ENCODE measurements at regions of chr14 and their contacts with region 1.

Region 1: GRCh38 chr14:29930283-29930682 is 2.6 kb upstream of the PRKD1 start:
- DNase-seq: no peak
- H3K4me3 ChIP-seq: no peak overlapping the region
- CTCF ChIP-seq: no peak
- POLR2A ChIP-seq: no peak

Region 2: GRCh38 chr14:30204431-30204980 is 274.2 kb after region 1 on chr14:
- intact Hi-C with region 1: no loop called
- DNase-seq: no peak
- H3K4me3 ChIP-seq: no peak overlapping the region
- CTCF ChIP-seq: no peak
- POLR2A ChIP-seq: no peak

Region 3: DNA sequence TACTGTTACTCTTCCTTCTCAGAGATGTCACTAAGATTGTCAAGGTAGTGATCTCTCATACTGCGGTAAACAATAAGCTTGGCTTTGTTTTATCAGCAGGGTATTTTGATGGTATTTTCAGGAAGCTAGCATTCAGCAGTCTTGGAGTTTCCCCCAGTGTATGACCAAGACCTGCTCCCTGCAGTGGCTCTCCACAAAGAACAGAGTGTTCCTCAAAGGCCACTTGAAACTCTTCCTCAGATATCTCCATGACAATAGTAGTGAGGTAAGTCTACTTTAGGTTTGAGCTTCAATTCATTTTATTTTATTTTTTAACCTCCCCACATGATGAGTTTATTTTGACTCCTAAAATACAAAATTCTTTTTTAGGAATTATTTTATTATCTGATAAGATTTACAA is 554.7 kb after region 1 on chr14:
- intact Hi-C with region 1: loop called (anchors 5 kb)
- DNase-seq: no peak
- H3K4me3 ChIP-seq: no peak overlapping the region
- CTCF ChIP-seq: no peak
- POLR2A ChIP-seq: no peak